ENCODE measurements at regions of chr15 and their contacts with region 1.

Region 1: GRCh38 chr15:72426753-72427152 is 28.6 kb downstream of the TMEM202 start:
- DNase-seq: no peak
- H3K4me3 ChIP-seq: no peak overlapping the region
- H3K27ac ChIP-seq: no peak overlapping the region
- H3K4me1 ChIP-seq: no peaks in the 10 kb centered on the region
- H3K27me3 ChIP-seq: no peaks in the 10 kb centered on the region
- CTCF ChIP-seq: no peak
- POLR2A ChIP-seq: no peak

Region 2: GRCh38 chr15:72994534-72995177 is 567.9 kb after region 1 on chr15:
- intact Hi-C with region 1: loop called (anchors 5 kb)
- DNase-seq: no peak
- H3K4me3 ChIP-seq: no peak overlapping the region
- H3K27ac ChIP-seq: no peak overlapping the region
- H3K4me1 ChIP-seq: peaks cover 14% of the 10 kb centered on the region
- H3K27me3 ChIP-seq: no peaks in the 10 kb centered on the region
- CTCF ChIP-seq: no peak
- POLR2A ChIP-seq: no peak